IMR-90 (cell line): ENCODE measurements at regions of chr17 and their contacts with region 1.

Region 1: GRCh38 chr17:75271233-75271954 is 363 bp upstream of the MIF4GD start:
- DNase-seq: no peak
- ATAC-seq: peak; percentile 90
- H3K4me3 ChIP-seq: peak overlapping the region; percentile 81
- H3K27ac ChIP-seq: peak overlapping the region; percentile 54; the same call in 1 of the 2 replicates
- H3K4me1 ChIP-seq: peaks cover 14% of the 10 kb centered on the region
- H3K27me3 ChIP-seq: no peaks in the 10 kb centered on the region
- CTCF ChIP-seq: peak; percentile 90
- POLR2A ChIP-seq: no peak
- RAD21 ChIP-seq: peak; percentile 28; the same call in 1 of the 2 replicates

Region 2: GRCh38 chr17:75289115-75289831 is 17.9 kb after region 1 on chr17 and contains the start of gene SLC25A19:
- CTCF ChIA-PET with region 1: interaction called, 15 read pairs
- POLR2A ChIA-PET with region 1: no interaction called
- dilution Hi-C with region 1: no loop called
- in situ Hi-C with region 1: no loop called
- intact Hi-C with region 1: no loop called
- DNase-seq: peak; percentile 98
- ATAC-seq: peak; percentile 99
- H3K4me3 ChIP-seq: peak within 1 kb of the TSS; percentile 70
- H3K27ac ChIP-seq: peak within 1 kb of the TSS; percentile 73
- H3K4me1 ChIP-seq: no peaks in the 10 kb centered on the region
- H3K27me3 ChIP-seq: no peaks in the 10 kb centered on the region
- CTCF ChIP-seq: 0 out of 2 replicates have a peak, but pooled peaks have one; percentile 19
- POLR2A ChIP-seq: peak; percentile 63
- RAD21 ChIP-seq: no peak
- total RNA-seq, gene SLC25A19: 8.3 and 9.1 TPM in 2 replicates

Region 3: DNA sequence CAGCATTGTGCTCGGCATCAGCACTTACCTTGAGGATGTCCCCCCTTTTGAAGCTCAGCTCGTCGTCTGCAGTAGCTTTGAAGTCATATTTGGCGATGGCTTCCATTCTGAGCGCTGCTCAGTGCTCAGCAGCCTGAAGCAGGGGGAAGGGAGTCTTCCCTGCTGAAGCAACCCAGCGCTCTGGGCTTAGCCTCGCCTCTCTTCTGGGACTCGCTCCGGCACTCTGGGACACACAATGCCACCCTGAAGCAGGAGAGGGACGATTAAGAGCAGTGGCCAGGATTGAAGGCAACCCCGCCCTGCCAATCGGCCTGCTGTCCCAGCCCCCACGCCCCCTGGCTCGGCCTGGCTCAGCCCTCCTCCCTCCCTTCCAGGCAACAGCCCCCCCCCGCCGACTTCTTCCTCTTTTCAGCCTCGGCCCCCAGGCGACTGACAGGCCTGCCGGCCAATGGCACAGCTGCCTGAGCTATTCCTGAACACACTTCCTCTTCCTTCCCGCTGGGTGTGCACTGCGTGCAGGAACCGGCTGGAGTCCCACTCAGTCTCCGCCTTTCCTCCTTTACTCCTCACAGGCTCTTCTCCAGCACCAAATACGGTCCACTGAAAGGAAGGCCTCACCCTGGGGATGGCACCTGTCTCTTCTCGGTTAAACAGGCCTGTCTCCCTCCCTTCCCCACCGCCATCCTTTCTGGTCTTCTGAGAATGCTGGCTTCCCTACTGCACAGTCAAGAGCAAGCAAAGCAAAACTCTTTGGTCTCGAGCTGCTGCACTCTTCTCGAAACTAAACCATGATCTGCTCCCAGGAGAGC is 122.3 kb after region 1 on chr17:
- CTCF ChIA-PET with region 1: interaction called, 4 read pairs
- POLR2A ChIA-PET with region 1: interaction called, 23 read pairs
- dilution Hi-C with region 1: no loop called
- in situ Hi-C with region 1: no loop called
- intact Hi-C with region 1: no loop called
- DNase-seq: peak; percentile 98
- ATAC-seq: peak; percentile 98
- H3K4me3 ChIP-seq: peak overlapping the region; percentile 77
- H3K27ac ChIP-seq: peak overlapping the region; percentile 91
- H3K4me1 ChIP-seq: no peaks in the 10 kb centered on the region; the same call in 1 of the 2 replicates
- H3K27me3 ChIP-seq: no peaks in the 10 kb centered on the region
- CTCF ChIP-seq: no peak
- POLR2A ChIP-seq: peak; percentile 50
- RAD21 ChIP-seq: no peak; the same call in 1 of the 2 replicates

Region 4: DNA sequence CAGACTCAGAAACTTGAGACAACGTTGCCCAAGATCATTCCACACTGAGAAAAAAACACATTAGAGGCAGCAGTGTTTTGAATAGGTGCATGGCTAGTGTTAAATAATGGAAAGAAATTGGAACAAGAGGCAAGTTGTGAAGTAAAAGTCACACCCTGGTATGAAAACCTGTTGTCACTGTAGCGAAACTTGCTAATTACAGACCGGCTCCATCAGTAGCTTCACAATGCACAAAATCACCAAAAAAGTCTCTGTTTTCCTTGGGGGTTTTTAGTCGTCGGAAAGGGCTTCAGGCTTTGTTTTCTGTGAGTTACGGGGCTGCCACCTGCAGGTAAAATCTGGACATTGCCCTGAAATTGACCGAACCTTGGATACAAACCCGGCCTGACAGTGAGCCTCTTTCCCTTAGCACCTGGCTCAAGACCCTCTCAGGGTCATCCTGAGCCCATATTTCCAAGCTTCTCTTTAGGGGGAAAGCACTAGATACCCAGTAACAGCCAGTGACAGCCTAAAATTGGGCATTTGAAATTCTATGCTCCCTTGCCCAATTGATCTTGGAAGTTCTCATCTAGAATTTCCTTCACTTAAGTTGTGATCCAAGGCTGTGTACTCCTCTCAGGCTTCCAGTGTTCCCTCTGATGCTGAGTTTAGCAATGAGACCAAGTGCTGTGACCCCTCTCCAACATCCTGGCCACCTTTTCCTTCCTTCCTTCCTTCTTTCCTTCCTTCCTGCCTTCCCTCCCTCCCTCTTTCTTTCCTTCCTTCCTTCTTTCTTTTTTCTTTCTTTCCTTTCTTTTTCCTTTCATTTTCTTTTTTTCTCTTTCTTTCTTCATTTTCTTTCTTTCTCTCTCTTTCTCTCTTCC is 141.3 kb after region 1 on chr17:
- CTCF ChIA-PET with region 1: interaction called, 5 read pairs
- POLR2A ChIA-PET with region 1: no interaction called
- dilution Hi-C with region 1: no loop called
- in situ Hi-C with region 1: no loop called
- intact Hi-C with region 1: loop called (anchors 1 kb)
- DNase-seq: peak; percentile 62
- ATAC-seq: peak; percentile 92
- H3K4me3 ChIP-seq: peak overlapping the region; percentile 22; the same call in 1 of the 2 replicates
- H3K27ac ChIP-seq: no peak overlapping the region
- H3K4me1 ChIP-seq: no peaks in the 10 kb centered on the region
- H3K27me3 ChIP-seq: peaks cover 5% of the 10 kb centered on the region
- CTCF ChIP-seq: peak; percentile 85
- POLR2A ChIP-seq: no peak
- RAD21 ChIP-seq: peak; percentile 86

Region 5: GRCh38 chr17:75515496-75516254 is 244.3 kb after region 1 on chr17 and contains the start of gene CASKIN2:
- CTCF ChIA-PET with region 1: no interaction called
- POLR2A ChIA-PET with region 1: no interaction called
- dilution Hi-C with region 1: no loop called
- in situ Hi-C with region 1: no loop called
- intact Hi-C with region 1: loop called (anchors 10 kb)
- DNase-seq: peak; percentile 86
- ATAC-seq: peak; percentile 79
- H3K4me3 ChIP-seq: peak within 1 kb of the TSS; percentile 82
- H3K27ac ChIP-seq: peak within 1 kb of the TSS; percentile 51
- H3K4me1 ChIP-seq: peaks cover 10% of the 10 kb centered on the region; the same call in 1 of the 2 replicates
- H3K27me3 ChIP-seq: no peaks in the 10 kb centered on the region
- CTCF ChIP-seq: peak; percentile 100
- POLR2A ChIP-seq: no peak
- RAD21 ChIP-seq: peak; percentile 82
- total RNA-seq, gene CASKIN2: 2.2 and 2.9 TPM in 2 replicates